Esophagus muscularis mucosa (tissue), 4 donors: ENCODE measurements at regions of chr19 and their contacts with region 1.

Region 1: GRCh38 chr19:19732579-19733501 is at the start of gene ZNF14:
- DNase-seq: peak; percentile 98
- H3K4me3 ChIP-seq: peak within 1 kb of the TSS; percentile 69 to 93 (median 88)
- H3K27ac ChIP-seq: peak within 1 kb of the TSS; percentile 78 to 82 (median 80)
- H3K4me1 ChIP-seq: peaks cover 0 to 24% (median 16%) of the 10 kb centered on the region in 4 donors
- H3K27me3 ChIP-seq: no peaks in the 10 kb centered on the region
- CTCF ChIP-seq: peak in 1 of 3 experiments; percentile 25
- EP300 ChIP-seq: no peak
- POLR2A ChIP-seq: no peak
- total RNA-seq, gene ZNF14: 5.1 to 7.9 (median 6.2) TPM

Region 2: DNA sequence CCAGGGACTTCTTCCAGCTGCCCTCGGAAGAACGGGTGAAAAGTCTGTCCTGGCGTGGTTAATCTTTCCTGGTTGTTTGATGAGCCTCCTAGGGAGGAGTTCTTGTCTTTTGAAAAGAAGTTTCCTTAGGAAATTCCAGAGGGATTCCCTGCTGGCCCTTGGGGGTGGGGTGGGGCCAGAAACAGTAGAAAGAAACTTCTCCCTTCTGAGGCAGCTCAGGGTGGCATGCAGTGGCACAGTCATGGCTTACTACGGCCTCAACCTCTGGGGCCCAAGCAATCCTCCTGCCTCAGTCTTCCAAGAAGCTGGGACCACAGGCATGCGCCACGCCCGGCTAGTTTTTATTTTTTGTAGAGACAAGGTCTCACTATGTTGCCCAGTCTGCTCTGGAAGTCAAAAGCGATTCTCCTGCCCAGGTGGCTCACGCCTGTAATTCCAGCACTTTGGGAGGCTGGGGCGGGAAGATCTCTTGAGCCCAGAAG is 62.7 kb before region 1 on chr19:
- intact Hi-C with region 1: loop called (anchors 5 kb)
- DNase-seq: no peak
- H3K4me3 ChIP-seq: peak overlapping the region in 3 of 4 donors; percentile 76 to 95 (median 78)
- H3K27ac ChIP-seq: no peak overlapping the region
- H3K4me1 ChIP-seq: peaks cover 9 to 28% (median 22%) of the 10 kb centered on the region in 4 donors
- H3K27me3 ChIP-seq: no peaks in the 10 kb centered on the region
- CTCF ChIP-seq: no peak
- EP300 ChIP-seq: no peak
- POLR2A ChIP-seq: no peak